Transverse colon (tissue), 4 donors: ENCODE measurements at regions of chr13 and their contacts with region 1.

Region 1: DNA sequence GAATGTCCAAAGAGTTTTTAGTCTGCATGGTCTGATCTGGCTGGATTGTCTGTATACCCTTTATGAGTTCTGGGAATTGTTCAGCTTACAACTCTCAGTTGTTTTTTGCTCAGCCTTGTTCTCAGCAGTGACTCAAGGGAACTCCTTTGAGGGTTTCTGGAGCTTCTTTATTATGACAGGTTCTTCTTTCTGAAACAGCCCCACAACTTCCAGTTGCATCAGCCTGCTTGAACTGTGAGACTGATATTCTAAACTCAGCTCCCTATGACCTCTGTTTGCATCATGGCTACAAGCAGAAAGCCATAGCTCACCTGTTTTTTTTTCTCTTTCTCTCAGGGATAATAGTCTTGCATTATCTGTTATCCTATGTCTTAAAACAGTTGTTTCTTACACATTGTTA is 85.0 kb downstream of the TDRD3 start:
- DNase-seq: no peak
- H3K4me3 ChIP-seq: no peak overlapping the region
- H3K27ac ChIP-seq: no peak overlapping the region
- H3K4me1 ChIP-seq: no peaks in the 10 kb centered on the region
- H3K27me3 ChIP-seq: no peaks in the 10 kb centered on the region
- CTCF ChIP-seq: no peak
- EP300 ChIP-seq: no peak
- POLR2A ChIP-seq: no peak

Region 2: GRCh38 chr13:60463787-60464186 is 18.2 kb before region 1 on chr13:
- in situ Hi-C with region 1: no loop called
- intact Hi-C with region 1: no loop called
- DNase-seq: no peak
- H3K4me3 ChIP-seq: no peak overlapping the region
- H3K27ac ChIP-seq: no peak overlapping the region
- H3K4me1 ChIP-seq: no peaks in the 10 kb centered on the region
- H3K27me3 ChIP-seq: no peaks in the 10 kb centered on the region
- CTCF ChIP-seq: no peak
- EP300 ChIP-seq: no peak
- POLR2A ChIP-seq: no peak

Region 3: DNA sequence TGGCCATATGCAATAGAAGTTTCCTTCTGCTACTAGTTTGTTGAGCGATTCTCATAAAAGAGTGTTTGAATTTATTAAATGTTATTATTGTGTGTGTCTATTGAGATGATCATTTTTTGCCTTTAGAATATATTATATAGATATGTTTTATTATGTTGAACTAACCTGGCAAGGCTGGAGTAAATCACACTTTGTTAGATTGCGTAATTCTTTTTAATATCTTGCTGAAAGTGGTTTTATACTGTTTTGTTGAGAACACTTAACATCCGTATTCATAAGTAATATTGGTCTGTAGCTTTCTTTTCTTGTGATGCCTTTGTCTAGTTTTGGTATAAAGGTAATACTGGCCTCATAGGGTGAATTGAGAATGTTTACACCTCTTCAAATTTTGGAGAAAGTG is 1508.0 kb after region 1 on chr13:
- in situ Hi-C with region 1: no loop called
- intact Hi-C with region 1: loop called (anchors 10 kb)
- DNase-seq: no peak
- H3K4me3 ChIP-seq: no peak overlapping the region
- H3K27ac ChIP-seq: no peak overlapping the region
- H3K4me1 ChIP-seq: no peaks in the 10 kb centered on the region
- H3K27me3 ChIP-seq: no peaks in the 10 kb centered on the region
- CTCF ChIP-seq: no peak
- EP300 ChIP-seq: no peak
- POLR2A ChIP-seq: no peak